PC-3 (cell line): ENCODE measurements at regions of chr16 and their contacts with region 1.

Region 1: DNA sequence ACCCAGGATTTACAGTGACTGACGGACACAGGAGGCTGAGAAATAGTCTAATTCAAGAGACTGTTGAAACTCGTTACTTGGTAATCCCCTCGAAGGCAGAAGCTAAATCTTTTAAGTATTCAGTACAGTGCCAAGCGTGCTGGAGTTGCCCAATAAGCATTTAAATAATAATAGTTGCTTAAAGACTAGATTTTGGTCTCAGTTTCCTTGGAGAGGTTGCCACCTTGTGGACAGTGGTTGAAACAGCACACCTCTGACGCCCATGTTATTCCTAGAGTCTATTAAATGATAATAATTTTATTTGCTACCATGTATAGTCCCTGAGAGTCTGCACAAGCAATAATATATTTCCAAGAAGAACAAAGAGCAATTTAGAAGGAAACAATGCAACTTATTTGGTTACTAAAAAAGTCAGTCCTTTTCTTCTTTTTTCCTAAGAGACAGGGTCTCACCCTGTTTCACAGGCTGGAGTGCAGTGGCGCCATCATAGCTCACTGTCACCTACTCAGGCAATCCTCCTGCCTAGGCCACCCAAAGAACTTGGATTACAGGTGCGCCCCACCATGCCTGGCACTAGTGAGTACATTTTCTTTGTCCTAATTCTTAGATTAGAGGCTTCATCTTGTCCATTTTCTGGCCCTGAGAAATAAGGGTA is 138.0 kb upstream of the NUDT7 start:
- DNase-seq: peak; percentile 72
- ATAC-seq: peak; percentile 29
- H3K4me3 ChIP-seq: no peak overlapping the region
- H3K27ac ChIP-seq: no peak overlapping the region
- H3K4me1 ChIP-seq: no peaks in the 10 kb centered on the region
- H3K27me3 ChIP-seq: peaks cover 14% of the 10 kb centered on the region; the same call in 1 of the 2 replicates
- CTCF ChIP-seq: peak; percentile 85

Region 2: GRCh38 chr16:77236063-77236511 is 348.2 kb before region 1 on chr16:
- CTCF ChIA-PET with region 1: interaction called, 4 read pairs
- POLR2A ChIA-PET with region 1: no interaction called
- intact Hi-C with region 1: loop called (anchors 1 kb)
- DNase-seq: peak; percentile 84
- ATAC-seq: peak; percentile 88
- H3K4me3 ChIP-seq: peak overlapping the region; percentile 46; the same call in 1 of the 2 replicates
- H3K27ac ChIP-seq: no peak overlapping the region
- H3K4me1 ChIP-seq: 0 out of 2 replicates have a peak, but pooled peaks cover 7% of the 10 kb centered on the region
- H3K27me3 ChIP-seq: no peaks in the 10 kb centered on the region
- CTCF ChIP-seq: peak; percentile 97

Region 3: GRCh38 chr16:77437859-77438258 is 146.5 kb before region 1 on chr16:
- CTCF ChIA-PET with region 1: no interaction called
- POLR2A ChIA-PET with region 1: no interaction called
- intact Hi-C with region 1: loop called (anchors 5 kb)
- DNase-seq: no peak
- ATAC-seq: no peak
- H3K4me3 ChIP-seq: no peak overlapping the region
- H3K27ac ChIP-seq: no peak overlapping the region
- H3K4me1 ChIP-seq: no peaks in the 10 kb centered on the region
- H3K27me3 ChIP-seq: peaks cover 45% of the 10 kb centered on the region
- CTCF ChIP-seq: no peak

Region 4: GRCh38 chr16:78034525-78034924 is 450.2 kb after region 1 on chr16:
- CTCF ChIA-PET with region 1: no interaction called
- POLR2A ChIA-PET with region 1: no interaction called
- intact Hi-C with region 1: no loop called
- DNase-seq: no peak
- ATAC-seq: no peak
- H3K4me3 ChIP-seq: no peak overlapping the region
- H3K27ac ChIP-seq: no peak overlapping the region
- H3K4me1 ChIP-seq: no peaks in the 10 kb centered on the region
- H3K27me3 ChIP-seq: 0 out of 2 replicates have a peak, but pooled peaks cover 4% of the 10 kb centered on the region
- CTCF ChIP-seq: no peak